SK-N-SH (cell line): ENCODE measurements at regions of chr7 and their contacts with region 1.

Region 1: GRCh38 chr7:149662591-149663095 is 110.7 kb downstream of the ZNF467 start:
- DNase-seq: peak; percentile 44
- H3K4me3 ChIP-seq: no peak overlapping the region
- H3K27ac ChIP-seq: no peak overlapping the region
- H3K4me1 ChIP-seq: no peaks in the 10 kb centered on the region; a peak in 1 of 4 replicates
- H3K27me3 ChIP-seq: no peaks in the 10 kb centered on the region
- CTCF ChIP-seq: peak; percentile 55
- EP300 ChIP-seq: no peak
- RAD21 ChIP-seq: peak; percentile 67

Region 2: DNA sequence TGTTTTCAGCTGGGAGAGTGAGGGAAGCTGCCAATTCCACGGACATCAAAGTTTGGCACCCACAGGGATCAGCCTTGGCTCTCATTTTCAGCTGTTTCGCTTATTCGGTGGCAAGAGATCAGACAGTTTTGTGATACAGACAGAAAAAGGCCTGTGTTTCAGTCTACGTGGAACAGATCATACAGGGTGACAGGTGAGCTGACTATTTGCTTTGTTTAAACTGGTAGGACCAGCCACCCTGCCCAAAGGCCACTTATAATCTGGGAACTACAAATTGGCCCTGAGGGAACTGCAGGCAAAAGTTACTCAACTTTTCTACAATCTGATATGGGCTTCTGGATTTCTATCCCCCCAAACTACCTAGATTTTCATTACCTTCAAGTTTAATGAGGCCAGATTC is 17.9 kb before region 1 on chr7:
- CTCF ChIA-PET with region 1: interaction called, 13 read pairs
- POLR2A ChIA-PET with region 1: no interaction called
- DNase-seq: no peak
- H3K4me3 ChIP-seq: no peak overlapping the region
- H3K27ac ChIP-seq: no peak overlapping the region
- H3K4me1 ChIP-seq: no peaks in the 10 kb centered on the region; a peak in 1 of 4 replicates
- H3K27me3 ChIP-seq: peaks cover 15% of the 10 kb centered on the region; the same call in 1 of the 2 replicates
- CTCF ChIP-seq: no peak
- EP300 ChIP-seq: no peak
- RAD21 ChIP-seq: no peak

Region 3: DNA sequence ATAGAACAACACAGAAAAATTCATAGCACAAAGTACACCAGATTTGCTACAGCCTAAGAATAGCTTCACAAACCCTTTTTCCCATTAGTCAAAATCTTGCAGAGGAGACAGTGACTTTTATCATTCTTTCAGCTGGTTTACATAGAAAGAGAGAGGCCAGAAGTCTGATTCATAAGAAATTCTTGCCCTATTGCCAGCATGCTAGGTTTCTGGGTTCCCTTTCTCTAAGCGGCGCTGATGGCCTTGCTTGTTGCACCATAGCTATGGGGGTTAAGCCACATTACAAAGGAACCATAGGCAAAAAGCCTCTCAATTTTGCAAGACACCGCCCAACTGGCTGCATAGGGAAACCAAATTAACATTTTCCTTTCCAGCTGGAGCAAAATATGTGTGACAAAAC is 23.4 kb after region 1 on chr7:
- CTCF ChIA-PET with region 1: interaction called, 12 read pairs
- POLR2A ChIA-PET with region 1: no interaction called
- DNase-seq: no peak
- H3K4me3 ChIP-seq: no peak overlapping the region
- H3K27ac ChIP-seq: no peak overlapping the region
- H3K4me1 ChIP-seq: no peaks in the 10 kb centered on the region; a peak in 1 of 4 replicates
- H3K27me3 ChIP-seq: no peaks in the 10 kb centered on the region; the same call in 1 of the 2 replicates
- CTCF ChIP-seq: no peak
- EP300 ChIP-seq: no peak
- RAD21 ChIP-seq: no peak

Region 4: DNA sequence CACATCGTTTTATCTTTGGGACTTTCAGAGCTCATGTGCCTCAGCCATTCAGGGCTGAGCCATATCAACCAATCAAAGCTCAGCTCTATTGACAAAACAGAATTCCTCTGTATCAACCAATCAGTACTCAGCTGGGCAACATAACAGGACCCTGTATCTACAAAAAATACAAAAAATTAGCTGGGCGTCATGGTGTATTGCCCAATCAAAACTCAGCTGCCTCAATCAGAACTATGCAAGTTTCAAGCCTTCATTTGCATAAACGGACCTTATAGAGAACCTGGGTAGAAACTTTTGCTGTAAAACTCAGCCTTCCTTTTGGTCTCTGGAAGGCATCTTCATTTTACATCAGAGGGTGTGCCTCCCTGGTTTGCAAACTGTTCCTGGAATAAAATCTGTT is 33.6 kb after region 1 on chr7:
- CTCF ChIA-PET with region 1: no interaction called
- POLR2A ChIA-PET with region 1: no interaction called
- DNase-seq: no peak
- H3K4me3 ChIP-seq: no peak overlapping the region
- H3K27ac ChIP-seq: no peak overlapping the region
- H3K4me1 ChIP-seq: no peaks in the 10 kb centered on the region
- H3K27me3 ChIP-seq: peaks cover 21% of the 10 kb centered on the region
- CTCF ChIP-seq: no peak
- EP300 ChIP-seq: no peak
- RAD21 ChIP-seq: no peak